ENCODE measurements at regions of chr15 and their contacts with region 1.

Region 1: GRCh38 chr15:62940755-62941361 is 101.7 kb upstream of the TPM1 start:
- DNase-seq: peak; percentile 90 to 91
- ATAC-seq: peak; percentile 92
- H3K4me3 ChIP-seq: no peak overlapping the region
- H3K27ac ChIP-seq: peak overlapping the region; percentile 61 to 95
- H3K4me1 ChIP-seq: peaks cover 0 to 5% of the 10 kb centered on the region in 2 donors
- H3K27me3 ChIP-seq: no peaks in the 10 kb centered on the region

Region 2: DNA sequence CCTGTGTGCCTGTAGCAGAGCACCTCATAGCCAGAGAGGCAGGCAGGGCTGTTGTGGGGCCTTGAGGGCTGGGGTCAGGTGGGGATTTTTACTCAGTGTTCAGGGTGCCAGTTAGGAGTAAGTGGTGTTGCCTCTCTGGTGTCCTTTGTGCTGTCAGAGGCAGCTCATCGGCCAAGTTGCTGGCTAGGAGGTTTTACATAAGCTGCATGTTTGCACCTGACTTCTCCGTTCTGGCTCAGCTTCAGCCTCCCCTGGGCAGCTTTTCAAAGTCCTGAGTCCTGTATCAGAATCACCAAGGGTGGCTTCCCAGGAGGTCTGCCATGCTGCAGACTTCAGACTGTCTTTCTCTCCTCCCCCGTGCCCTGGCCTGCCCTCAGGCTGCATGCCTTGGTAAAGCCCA is 140.9 kb before region 1 on chr15:
- intact Hi-C with region 1: no loop called
- DNase-seq: no peak
- ATAC-seq: no peak
- H3K4me3 ChIP-seq: no peak overlapping the region
- H3K27ac ChIP-seq: no peak overlapping the region
- H3K4me1 ChIP-seq: no peaks in the 10 kb centered on the region
- H3K27me3 ChIP-seq: no peaks in the 10 kb centered on the region

Region 3: GRCh38 chr15:62985768-62986167 is 44.9 kb after region 1 on chr15:
- intact Hi-C with region 1: loop called in 1 of 2 experiments (anchors 5 kb)
- DNase-seq: no peak
- ATAC-seq: no peak
- H3K4me3 ChIP-seq: no peak overlapping the region
- H3K27ac ChIP-seq: no peak overlapping the region
- H3K4me1 ChIP-seq: no peaks in the 10 kb centered on the region
- H3K27me3 ChIP-seq: no peaks in the 10 kb centered on the region

Measured in aorta (tissue), 5 donors.